Activated T-helper 1 cell treated with anti-CD3 and anti-CD28 coated beads, Interleukin-12 subunit alpha, Interleukin-12 subunit beta, Interleukin-2, Interleukin-4 antibody, amounts not matched to agents 30 ng/mL and 10 ng/mL and 1 ng/mL, durations not matched to agents 14 hours and 24 hours and 36 hours (primary cell): ENCODE measurements at regions of chr6 and their contacts with region 1.

Region 1: DNA sequence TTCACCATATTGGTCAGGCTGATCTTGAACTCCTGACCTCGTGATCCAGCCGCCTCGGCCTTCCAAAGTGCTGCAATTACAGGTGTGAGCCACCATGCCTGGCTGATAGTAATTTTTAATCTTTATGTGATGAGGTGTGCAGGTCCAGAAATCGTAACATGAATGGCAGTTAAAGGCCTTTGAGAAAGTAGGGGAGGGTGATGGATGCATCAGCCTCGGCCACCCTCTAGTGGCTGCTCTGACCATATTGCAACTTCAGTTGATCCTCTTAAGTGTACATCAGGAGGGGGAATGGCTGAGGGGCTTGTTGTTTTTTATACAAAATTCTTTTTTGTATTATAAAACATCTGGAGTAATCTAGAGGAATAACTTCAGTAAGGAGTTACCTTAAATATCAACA is 193.0 kb downstream of the ZFAND3 start:
- DNase-seq: no peak
- H3K4me3 Mint-ChIP-seq: no peak overlapping the region
- H3K27ac Mint-ChIP-seq: no peak overlapping the region
- H3K4me1 Mint-ChIP-seq: peaks cover 6% of the 10 kb centered on the region
- H3K27me3 Mint-ChIP-seq: no peaks in the 10 kb centered on the region

Region 2: DNA sequence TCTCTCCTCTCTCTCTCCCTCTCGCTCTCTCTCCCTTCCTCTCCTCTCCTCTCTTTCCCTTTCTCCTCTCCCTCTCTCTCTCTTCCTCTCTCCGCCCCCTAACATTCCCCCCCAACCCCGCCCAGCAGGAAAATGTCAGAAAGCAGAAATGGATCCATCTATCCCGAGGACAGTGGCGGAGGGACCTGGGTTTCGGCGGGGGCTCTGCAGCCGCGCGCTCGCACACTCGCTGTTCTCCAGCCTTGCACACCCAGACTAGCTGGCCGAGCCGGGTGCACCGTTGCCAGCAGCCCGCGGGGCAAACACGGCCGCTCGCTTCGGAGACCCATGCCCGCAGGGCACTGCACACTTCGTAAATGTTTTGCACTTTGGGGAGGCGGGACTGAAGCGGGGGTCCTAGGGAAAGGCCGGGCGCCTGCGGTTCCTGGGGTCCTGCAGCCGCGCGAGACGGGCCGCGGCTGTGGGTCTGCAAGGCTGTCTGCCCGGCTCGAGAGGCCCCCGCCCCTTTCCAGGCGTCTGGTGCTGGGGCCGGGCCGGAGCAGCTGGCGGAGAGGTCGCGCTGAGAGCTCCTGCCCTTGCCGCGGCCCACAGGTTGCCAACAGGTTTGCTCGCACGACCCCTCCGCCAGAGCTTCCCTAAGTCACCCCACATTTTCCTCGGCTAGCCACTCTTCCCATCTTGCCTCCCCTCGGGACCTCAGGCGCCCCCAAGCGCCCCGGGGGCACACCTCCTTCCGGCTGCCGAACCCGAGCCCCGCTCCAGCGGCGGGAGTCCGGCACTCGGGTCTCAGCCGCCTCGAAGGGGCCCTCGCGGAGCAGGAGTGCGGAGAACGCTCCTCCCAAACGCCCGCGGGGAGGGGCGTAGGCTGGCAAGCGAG is 314.1 kb before region 1 on chr6:
- intact Hi-C with region 1: loop called (anchors 2 kb)
- DNase-seq: peak; percentile 58
- H3K4me3 Mint-ChIP-seq: peak overlapping the region; percentile 91
- H3K27ac Mint-ChIP-seq: peak overlapping the region; percentile 91
- H3K4me1 Mint-ChIP-seq: peaks cover 28% of the 10 kb centered on the region
- H3K27me3 Mint-ChIP-seq: peaks cover 34% of the 10 kb centered on the region

Region 3: GRCh38 chr6:37705239-37706051 is 307.1 kb before region 1 on chr6:
- intact Hi-C with region 1: loop called (anchors 2 kb)
- DNase-seq: peak; percentile 36
- H3K4me3 Mint-ChIP-seq: peak overlapping the region; percentile 79
- H3K27ac Mint-ChIP-seq: peak overlapping the region; percentile 42
- H3K4me1 Mint-ChIP-seq: peaks cover 6% of the 10 kb centered on the region
- H3K27me3 Mint-ChIP-seq: peaks cover 11% of the 10 kb centered on the region